HEK293T (cell line): ENCODE measurements at regions of chr14 and their contacts with region 1.

Region 1: GRCh38 chr14:54329082-54329695 is 67.6 kb upstream of the CDKN3 start:
- DNase-seq: peak; percentile 77

Region 2: GRCh38 chr14:54175298-54175942 is 153.8 kb before region 1 on chr14:
- CTCF ChIA-PET with region 1: interaction called, 10 read pairs
- POLR2A ChIA-PET with region 1: no interaction called
- DNase-seq: peak; percentile 60

Region 3: GRCh38 chr14:54306806-54307205 is 22.4 kb before region 1 on chr14:
- CTCF ChIA-PET with region 1: interaction called, 11 read pairs
- POLR2A ChIA-PET with region 1: no interaction called
- DNase-seq: no peak

Region 4: DNA sequence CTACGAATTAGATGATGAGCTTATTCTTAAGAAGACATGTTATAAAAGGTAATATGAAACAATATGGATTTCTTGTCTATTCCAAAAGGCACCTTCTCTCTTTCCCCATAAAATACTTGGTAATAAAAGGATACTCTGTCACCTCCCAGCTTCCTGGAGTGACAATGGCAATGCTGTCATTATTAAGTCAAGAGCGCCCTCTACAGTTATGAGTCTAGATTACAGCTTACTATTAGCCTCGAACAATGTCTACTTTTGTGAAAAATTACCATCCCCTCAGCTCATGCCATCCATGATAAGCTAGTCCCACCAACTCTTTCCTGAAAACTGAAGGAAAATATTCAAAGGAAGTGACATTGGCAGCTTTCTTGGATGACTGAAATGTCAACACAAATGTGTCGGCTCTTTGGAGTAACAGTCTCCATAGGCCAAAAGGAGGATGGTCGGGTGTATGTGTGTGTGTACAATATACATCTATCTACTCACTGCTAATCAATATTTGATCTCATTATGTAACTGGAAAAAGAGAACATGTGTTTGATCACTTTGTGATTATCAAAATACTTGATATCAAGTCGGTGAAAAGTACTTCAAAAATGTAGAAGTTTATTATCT is 18.9 kb after region 1 on chr14:
- CTCF ChIA-PET with region 1: interaction called, 15 read pairs
- POLR2A ChIA-PET with region 1: no interaction called
- DNase-seq: peak; percentile 57

Region 5: DNA sequence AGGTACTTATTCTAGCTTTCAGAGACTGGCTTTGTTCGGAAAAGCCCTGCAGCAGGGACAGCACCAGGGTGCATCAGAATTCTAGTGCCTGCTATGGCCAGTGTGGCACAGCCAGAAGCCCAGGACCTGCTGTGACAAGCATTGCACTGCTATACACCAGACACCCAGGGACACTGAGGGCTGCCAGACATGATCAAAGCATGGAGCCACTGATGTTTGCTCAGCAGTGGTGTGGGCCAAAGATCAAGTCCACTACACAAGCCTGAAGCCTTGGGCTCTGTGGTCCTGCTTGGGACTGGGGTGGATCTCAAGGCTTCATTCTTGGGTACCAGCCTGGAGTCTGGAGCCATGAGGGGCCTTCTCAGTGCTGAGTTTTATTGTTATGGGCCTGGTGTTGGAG is 31.5 kb after region 1 on chr14:
- CTCF ChIA-PET with region 1: no interaction called
- POLR2A ChIA-PET with region 1: no interaction called
- DNase-seq: no peak

Region 6: GRCh38 chr14:54374117-54374884 is 45.1 kb after region 1 on chr14:
- CTCF ChIA-PET with region 1: no interaction called
- POLR2A ChIA-PET with region 1: no interaction called
- DNase-seq: no peak

Region 7: DNA sequence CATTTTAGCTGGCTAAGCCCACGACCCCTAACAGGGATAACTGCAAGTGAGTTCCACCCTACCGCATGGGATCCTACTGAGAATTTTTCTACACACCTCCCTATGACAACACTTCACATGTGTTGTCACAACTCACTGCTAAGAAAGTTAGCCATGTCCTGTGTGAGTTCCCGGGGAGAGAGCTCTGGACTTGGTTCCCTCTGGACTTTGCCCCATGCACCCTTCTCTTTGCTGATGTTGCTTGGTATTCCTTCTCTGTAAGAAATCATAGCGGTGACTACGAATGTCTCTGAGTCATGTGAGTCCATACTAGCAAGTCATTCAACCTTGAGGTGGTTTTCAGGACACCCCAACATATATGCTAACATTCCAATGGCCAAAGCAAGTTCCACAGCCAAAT is 58.1 kb after region 1 on chr14:
- CTCF ChIA-PET with region 1: no interaction called
- POLR2A ChIA-PET with region 1: no interaction called
- DNase-seq: no peak